Endothelial cell of umbilical vein (primary cell): ENCODE measurements at regions of chr16 and their contacts with region 1.

Region 1: GRCh38 chr16:83068686-83069085 is 441.9 kb downstream of the CDH13 start:
- DNase-seq: peak; percentile 91
- H3K4me3 ChIP-seq: no peak overlapping the region
- H3K27ac ChIP-seq: no peak overlapping the region
- H3K4me1 ChIP-seq: peaks cover 36% of the 10 kb centered on the region
- H3K27me3 ChIP-seq: no peaks in the 10 kb centered on the region
- CTCF ChIP-seq: peak; percentile 34 to 35
- POLR2A ChIP-seq: no peak

Region 2: DNA sequence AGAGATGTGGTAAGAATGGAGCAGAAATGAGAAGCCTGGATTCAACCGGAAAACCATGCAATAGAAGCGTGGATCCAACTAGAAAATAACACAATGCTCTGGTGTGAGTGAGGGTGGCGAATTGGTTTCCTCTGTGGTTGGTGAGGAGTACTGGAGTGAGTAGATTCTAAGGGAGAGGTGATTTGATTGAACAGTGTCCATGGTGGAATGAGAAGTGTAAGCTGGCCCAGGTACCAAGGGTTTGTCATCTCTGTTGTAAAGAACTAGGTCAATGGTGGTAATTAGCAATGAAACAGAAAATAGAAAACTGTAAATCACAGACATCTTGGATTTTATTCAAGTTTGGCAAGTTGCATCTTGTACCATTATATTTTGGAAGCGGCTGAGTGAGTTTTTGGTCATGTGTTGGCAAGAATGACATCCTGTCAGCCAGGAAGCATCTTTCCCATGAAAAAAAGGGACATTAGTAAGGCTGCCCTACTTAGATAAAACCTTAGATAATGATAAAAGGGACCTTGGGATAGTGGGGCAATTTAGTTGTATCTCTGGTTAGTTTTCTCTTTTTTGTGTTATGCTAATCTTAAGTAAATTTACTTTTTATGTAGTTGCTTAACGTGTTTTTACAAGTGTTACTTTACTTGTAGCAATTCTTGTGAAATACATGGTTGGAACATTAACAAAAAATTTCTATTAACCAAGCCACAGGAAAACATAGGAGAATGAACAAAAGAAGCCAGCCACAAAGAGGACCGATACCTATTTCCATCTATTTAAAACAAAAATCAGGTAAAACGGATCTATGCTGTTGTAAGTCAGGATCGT is 1012.7 kb before region 1 on chr16:
- CTCF ChIA-PET with region 1: no interaction called
- POLR2A ChIA-PET with region 1: no interaction called
- dilution Hi-C with region 1: no loop called
- intact Hi-C with region 1: no loop called
- DNase-seq: no peak
- H3K4me3 ChIP-seq: no peak overlapping the region
- H3K27ac ChIP-seq: no peak overlapping the region
- H3K4me1 ChIP-seq: no peaks in the 10 kb centered on the region
- H3K27me3 ChIP-seq: peaks cover 16 to 17% of the 10 kb centered on the region in 2 experiments
- CTCF ChIP-seq: no peak
- POLR2A ChIP-seq: no peak

Region 3: DNA sequence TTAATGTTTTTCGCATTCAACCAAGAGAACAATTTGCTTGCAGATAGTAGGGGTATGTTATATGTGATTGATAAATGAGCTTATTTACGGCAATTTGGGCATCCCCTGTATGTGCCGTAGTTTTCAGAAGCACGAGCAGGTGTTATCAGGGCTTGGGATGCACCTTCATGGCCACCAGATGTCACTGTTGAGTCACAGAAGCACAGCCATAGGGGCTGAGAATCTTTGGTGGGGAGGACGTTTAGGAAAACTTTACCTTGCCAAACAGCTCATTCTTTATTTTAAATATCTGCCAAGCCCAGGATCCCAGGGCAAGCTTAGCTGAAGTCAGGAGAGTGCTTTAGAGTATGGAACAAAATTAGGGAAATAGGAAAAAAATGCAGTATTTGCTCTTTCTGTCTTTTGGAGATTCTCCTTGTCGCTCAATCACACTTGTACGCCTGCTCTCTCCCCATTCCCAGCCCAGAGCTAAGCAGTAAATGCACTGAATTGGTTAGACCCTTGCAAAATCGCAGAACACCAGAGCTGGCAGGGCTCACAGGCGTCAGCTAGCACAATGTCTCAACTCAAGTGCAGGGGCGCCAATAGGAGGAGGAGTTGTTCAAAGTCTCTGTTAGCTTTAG is 805.1 kb before region 1 on chr16:
- CTCF ChIA-PET with region 1: no interaction called
- POLR2A ChIA-PET with region 1: no interaction called
- dilution Hi-C with region 1: no loop called
- intact Hi-C with region 1: loop called (anchors 5 kb)
- DNase-seq: peak; percentile 55
- H3K4me3 ChIP-seq: no peak overlapping the region
- H3K27ac ChIP-seq: no peak overlapping the region
- H3K4me1 ChIP-seq: no peaks in the 10 kb centered on the region
- H3K27me3 ChIP-seq: peaks cover 4 to 13% of the 10 kb centered on the region in 2 experiments
- CTCF ChIP-seq: peak; percentile 84 to 85
- POLR2A ChIP-seq: no peak

Region 4: DNA sequence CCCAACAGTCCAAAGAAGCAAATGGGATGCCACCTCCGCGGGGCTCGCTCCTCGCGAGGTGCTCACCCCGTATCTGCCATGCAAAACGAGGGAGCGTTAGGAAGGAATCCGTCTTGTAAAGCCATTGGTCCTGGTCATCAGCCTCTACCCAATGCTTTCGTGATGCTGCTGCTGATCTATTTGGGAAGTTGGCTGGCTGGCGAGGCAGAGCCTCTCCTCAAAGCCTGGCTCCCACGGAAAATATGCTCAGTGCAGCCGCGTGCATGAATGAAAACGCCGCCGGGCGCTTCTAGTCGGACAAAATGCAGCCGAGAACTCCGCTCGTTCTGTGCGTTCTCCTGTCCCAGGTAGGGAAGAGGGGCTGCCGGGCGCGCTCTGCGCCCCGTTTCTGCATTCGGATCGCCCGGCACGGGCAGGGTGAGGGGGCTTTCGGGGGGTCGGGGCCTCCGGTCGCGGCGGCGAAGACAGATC is 441.9 kb before region 1 on chr16 and contains the start of gene CDH13:
- CTCF ChIA-PET with region 1: interaction called, 6 read pairs
- POLR2A ChIA-PET with region 1: no interaction called
- dilution Hi-C with region 1: no loop called
- intact Hi-C with region 1: loop called (anchors 1 kb)
- DNase-seq: peak; percentile 62
- H3K4me3 ChIP-seq: peak within 1 kb of the TSS; percentile 52 to 82 (median 66)
- H3K27ac ChIP-seq: peak within 1 kb of the TSS; percentile 96
- H3K4me1 ChIP-seq: peaks cover 46% of the 10 kb centered on the region
- H3K27me3 ChIP-seq: peaks cover 0 to 2% of the 10 kb centered on the region in 2 experiments
- CTCF ChIP-seq: no peak
- POLR2A ChIP-seq: no peak
- total RNA-seq, gene CDH13: 98.5 and 124 TPM in 2 replicates

Region 5: DNA sequence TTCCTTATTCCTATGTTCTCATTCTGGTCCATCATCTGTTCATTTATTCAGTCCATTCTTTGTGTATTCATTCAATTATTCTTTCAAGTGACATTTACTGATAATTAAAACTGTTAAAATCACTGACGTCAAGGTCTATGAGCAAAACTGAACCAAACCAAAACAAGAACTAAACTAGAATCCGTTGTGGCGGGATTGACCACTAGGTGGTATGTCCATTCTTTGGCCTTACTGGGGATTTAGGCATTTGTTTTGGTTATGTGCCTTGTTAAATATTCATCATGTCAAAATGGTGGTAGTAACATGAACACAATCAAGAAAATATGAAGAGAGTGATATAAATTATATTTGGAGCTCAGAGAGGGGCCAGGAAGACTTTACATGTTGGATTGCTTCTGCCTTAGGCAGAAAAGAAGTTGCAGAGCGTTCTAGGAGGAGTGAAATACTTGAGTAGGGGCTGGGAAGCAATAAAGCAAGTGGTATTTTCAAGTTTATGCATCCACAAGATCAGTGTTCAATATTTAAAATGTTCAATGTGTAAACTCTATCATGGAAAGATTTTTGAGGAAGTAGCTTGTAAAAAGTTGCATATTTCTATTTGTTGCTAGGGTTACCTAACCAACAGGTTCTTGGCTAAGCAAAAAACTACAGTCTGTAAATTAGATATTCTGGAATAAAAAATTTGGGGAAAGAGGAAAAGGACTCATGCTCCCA is 313.0 kb before region 1 on chr16:
- CTCF ChIA-PET with region 1: no interaction called
- POLR2A ChIA-PET with region 1: no interaction called
- dilution Hi-C with region 1: no loop called
- intact Hi-C with region 1: loop called (anchors 1 kb)
- DNase-seq: no peak
- H3K4me3 ChIP-seq: no peak overlapping the region
- H3K27ac ChIP-seq: peak overlapping the region; percentile 92
- H3K4me1 ChIP-seq: peaks cover 59% of the 10 kb centered on the region
- H3K27me3 ChIP-seq: no peaks in the 10 kb centered on the region
- CTCF ChIP-seq: peak in 1 of 2 donors; percentile 7
- POLR2A ChIP-seq: no peak

Region 6: GRCh38 chr16:82945420-82946101 is 123.1 kb before region 1 on chr16:
- CTCF ChIA-PET with region 1: interaction called, 4 read pairs
- POLR2A ChIA-PET with region 1: no interaction called
- dilution Hi-C with region 1: no loop called
- intact Hi-C with region 1: loop called (anchors 2 kb)
- DNase-seq: peak; percentile 69
- H3K4me3 ChIP-seq: no peak overlapping the region
- H3K27ac ChIP-seq: peak overlapping the region; percentile 80
- H3K4me1 ChIP-seq: peaks cover 30% of the 10 kb centered on the region
- H3K27me3 ChIP-seq: no peaks in the 10 kb centered on the region
- CTCF ChIP-seq: no peak
- POLR2A ChIP-seq: peak; percentile 47

Region 7: DNA sequence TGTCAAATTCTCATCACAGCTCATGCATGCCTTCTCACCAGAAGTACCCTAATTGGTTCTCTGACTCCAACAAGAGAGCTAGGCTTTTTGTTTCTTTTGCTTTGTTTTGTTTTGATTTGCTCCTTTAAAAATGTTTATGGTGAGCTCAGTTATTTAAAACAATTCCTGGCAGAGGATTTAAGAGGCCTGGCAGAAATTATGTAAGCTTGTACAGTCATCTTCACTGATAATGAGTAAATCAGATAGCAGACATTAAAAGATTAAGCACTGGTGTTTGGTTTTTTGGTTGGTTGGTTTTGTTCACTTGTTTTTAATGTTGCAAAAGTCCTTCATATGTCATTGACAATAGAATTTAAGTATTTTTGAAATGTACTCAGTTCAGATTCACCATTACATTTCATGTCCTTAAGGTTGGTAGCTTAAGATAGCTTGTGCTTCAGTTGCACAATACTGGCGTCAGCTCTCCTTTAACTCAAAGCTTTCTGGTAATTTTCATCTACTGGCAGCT is 63.0 kb before region 1 on chr16:
- CTCF ChIA-PET with region 1: no interaction called
- POLR2A ChIA-PET with region 1: no interaction called
- dilution Hi-C with region 1: no loop called
- intact Hi-C with region 1: no loop called
- DNase-seq: no peak
- H3K4me3 ChIP-seq: no peak overlapping the region
- H3K27ac ChIP-seq: no peak overlapping the region
- H3K4me1 ChIP-seq: peaks cover 36% of the 10 kb centered on the region
- H3K27me3 ChIP-seq: no peaks in the 10 kb centered on the region
- CTCF ChIP-seq: no peak
- POLR2A ChIP-seq: no peak

Region 8: DNA sequence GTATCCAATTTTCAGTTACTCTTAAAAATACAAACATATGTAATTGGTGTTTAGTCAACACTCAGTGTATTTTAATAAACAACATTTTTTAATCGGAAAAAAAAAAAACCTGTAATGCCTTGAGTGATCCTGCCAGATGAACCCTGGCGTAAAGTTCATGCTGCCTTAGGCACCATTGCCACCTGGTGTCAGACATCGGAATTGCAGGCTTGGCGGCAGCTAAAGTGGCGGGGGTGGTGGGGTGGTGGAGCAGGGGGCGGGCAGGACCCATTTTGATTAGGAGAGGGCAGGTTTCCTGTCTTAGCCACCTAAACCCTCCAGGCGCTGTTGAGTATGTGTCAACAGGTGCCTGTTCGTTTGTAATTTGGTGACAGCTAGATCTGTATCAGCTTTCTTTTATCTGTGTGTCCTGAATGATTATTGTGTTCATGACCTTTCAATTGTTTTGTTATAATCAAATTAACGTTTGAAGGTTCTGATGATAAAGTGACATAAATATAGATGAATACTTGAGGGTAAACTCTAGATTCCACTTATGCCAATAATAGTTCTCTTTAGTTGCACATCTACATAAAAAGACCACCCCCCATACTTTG is 146.8 kb after region 1 on chr16:
- CTCF ChIA-PET with region 1: interaction called, 3 read pairs
- POLR2A ChIA-PET with region 1: no interaction called
- dilution Hi-C with region 1: no loop called
- intact Hi-C with region 1: loop called (anchors 1 kb)
- DNase-seq: peak; percentile 48
- H3K4me3 ChIP-seq: no peak overlapping the region
- H3K27ac ChIP-seq: no peak overlapping the region
- H3K4me1 ChIP-seq: no peaks in the 10 kb centered on the region
- H3K27me3 ChIP-seq: no peaks in the 10 kb centered on the region
- CTCF ChIP-seq: peak; percentile 74 to 78
- POLR2A ChIP-seq: no peak

Region 9: GRCh38 chr16:83315271-83315670 is 246.6 kb after region 1 on chr16:
- CTCF ChIA-PET with region 1: no interaction called
- POLR2A ChIA-PET with region 1: no interaction called
- dilution Hi-C with region 1: no loop called
- intact Hi-C with region 1: no loop called
- DNase-seq: no peak
- H3K4me3 ChIP-seq: no peak overlapping the region
- H3K27ac ChIP-seq: no peak overlapping the region
- H3K4me1 ChIP-seq: no peaks in the 10 kb centered on the region
- H3K27me3 ChIP-seq: no peaks in the 10 kb centered on the region
- CTCF ChIP-seq: no peak
- POLR2A ChIP-seq: no peak